Activated CD8-positive, alpha-beta T cell treated with anti-CD3 and anti-CD28 coated beads for 36 hours (primary cell): ENCODE measurements at regions of chr12 and their contacts with region 1.

Region 1: DNA sequence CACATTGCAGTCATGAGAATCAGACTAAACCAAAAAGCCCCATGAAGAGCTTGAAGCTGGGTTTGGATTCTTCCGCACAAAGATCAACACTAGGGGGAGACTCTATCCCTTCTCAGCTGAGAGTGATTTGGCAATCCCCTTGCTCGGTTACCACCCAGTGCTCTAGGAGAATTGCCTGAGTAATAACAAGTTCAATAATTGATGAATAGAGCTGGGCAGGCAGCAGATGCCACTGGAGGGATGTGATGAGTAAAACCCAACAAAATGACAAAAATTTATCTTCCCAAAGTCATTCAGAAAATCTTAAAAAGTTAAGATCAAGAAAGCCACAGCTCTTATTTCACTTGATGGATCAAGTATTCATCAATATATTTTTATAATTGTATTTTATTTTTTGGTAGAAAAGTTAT is 185.6 kb upstream of the ARID2 start:
- DNase-seq: peak; percentile 69
- ATAC-seq: peak; percentile 97
- H3K4me3 Mint-ChIP-seq: no peak overlapping the region
- H3K27ac Mint-ChIP-seq: no peak overlapping the region
- H3K4me1 Mint-ChIP-seq: peaks cover 4% of the 10 kb centered on the region
- H3K27me3 Mint-ChIP-seq: peaks cover 5% of the 10 kb centered on the region
- CTCF ChIP-seq: peak; percentile 80

Region 2: DNA sequence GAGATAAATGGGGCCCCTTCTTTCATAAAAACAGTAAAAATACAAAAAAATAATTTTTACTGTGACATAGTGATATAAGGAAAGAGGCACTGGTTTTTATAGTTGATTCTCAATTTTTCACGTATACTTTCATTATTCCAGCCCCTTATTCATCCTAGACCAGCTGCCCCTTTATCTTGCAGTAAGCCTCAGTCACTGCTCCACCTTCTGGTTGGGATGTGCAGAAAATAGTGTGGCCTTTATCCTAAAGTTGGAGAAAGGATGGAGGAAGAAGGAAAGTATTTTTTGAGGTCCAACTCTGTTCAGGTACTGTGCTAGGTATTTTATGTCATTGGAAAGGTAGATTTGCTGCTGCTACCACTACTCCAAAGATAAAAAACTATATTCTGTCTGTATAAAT is 155.4 kb before region 1 on chr12:
- CTCF ChIA-PET with region 1: no interaction called
- POLR2A ChIA-PET with region 1: no interaction called
- intact Hi-C with region 1: no loop called
- DNase-seq: peak; percentile 16
- ATAC-seq: peak; percentile 39
- H3K4me3 Mint-ChIP-seq: no peak overlapping the region
- H3K27ac Mint-ChIP-seq: no peak overlapping the region
- H3K4me1 Mint-ChIP-seq: no peaks in the 10 kb centered on the region
- H3K27me3 Mint-ChIP-seq: no peaks in the 10 kb centered on the region
- CTCF ChIP-seq: peak; percentile 18

Region 3: GRCh38 chr12:45532113-45532512 is 11.8 kb before region 1 on chr12:
- CTCF ChIA-PET with region 1: interaction called, 34 read pairs
- POLR2A ChIA-PET with region 1: no interaction called
- intact Hi-C with region 1: no loop called
- DNase-seq: no peak
- ATAC-seq: no peak
- H3K4me3 Mint-ChIP-seq: no peak overlapping the region
- H3K27ac Mint-ChIP-seq: no peak overlapping the region
- H3K4me1 Mint-ChIP-seq: no peaks in the 10 kb centered on the region
- H3K27me3 Mint-ChIP-seq: peaks cover 4% of the 10 kb centered on the region
- CTCF ChIP-seq: no peak

Region 4: GRCh38 chr12:45670346-45671065 is 126.6 kb after region 1 on chr12:
- CTCF ChIA-PET with region 1: interaction called, 15 read pairs
- POLR2A ChIA-PET with region 1: no interaction called
- intact Hi-C with region 1: no loop called
- DNase-seq: peak; percentile 9
- ATAC-seq: peak; percentile 62
- H3K4me3 Mint-ChIP-seq: no peak overlapping the region
- H3K27ac Mint-ChIP-seq: no peak overlapping the region
- H3K4me1 Mint-ChIP-seq: peaks cover 45% of the 10 kb centered on the region
- H3K27me3 Mint-ChIP-seq: no peaks in the 10 kb centered on the region
- CTCF ChIP-seq: no peak

Region 5: DNA sequence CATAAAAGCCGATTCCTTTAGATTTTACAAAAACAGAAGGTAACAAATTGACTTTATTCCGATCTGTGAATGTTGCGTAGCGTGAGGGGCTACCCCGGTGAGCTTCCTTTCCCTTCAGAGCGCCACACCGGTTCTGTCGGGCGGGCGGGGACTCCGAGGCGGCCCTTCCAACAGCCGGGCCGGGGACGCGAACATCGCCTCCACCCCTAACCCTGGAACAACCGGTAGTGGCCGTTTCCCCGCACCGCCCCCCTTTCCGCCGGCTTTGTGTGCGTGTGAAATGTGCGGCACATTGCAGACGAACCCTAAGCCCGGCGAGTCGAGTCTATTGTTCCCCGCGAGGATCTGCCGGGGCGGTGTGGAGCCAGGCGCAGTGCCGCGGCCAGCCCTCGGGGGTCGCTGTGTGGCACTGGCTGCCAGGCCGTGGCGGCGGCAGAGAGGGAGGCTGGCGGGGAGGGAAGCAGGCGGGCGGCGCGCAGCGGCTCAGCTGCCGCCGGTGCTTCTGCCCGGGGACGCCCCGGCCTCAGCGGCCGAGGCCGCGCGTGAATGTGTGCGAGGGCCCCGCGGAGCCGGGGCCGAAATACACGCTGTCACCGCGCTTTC is 184.8 kb after region 1 on chr12:
- CTCF ChIA-PET with region 1: interaction called, 119 read pairs
- POLR2A ChIA-PET with region 1: interaction called, 9 read pairs
- intact Hi-C with region 1: loop called (anchors 5 kb)
- DNase-seq: peak; percentile 97
- ATAC-seq: peak; percentile 77
- H3K4me3 Mint-ChIP-seq: peak overlapping the region; percentile 88
- H3K27ac Mint-ChIP-seq: peak overlapping the region; percentile 99
- H3K4me1 Mint-ChIP-seq: peaks cover 18% of the 10 kb centered on the region
- H3K27me3 Mint-ChIP-seq: no peaks in the 10 kb centered on the region
- CTCF ChIP-seq: peak; percentile 89

Region 6: DNA sequence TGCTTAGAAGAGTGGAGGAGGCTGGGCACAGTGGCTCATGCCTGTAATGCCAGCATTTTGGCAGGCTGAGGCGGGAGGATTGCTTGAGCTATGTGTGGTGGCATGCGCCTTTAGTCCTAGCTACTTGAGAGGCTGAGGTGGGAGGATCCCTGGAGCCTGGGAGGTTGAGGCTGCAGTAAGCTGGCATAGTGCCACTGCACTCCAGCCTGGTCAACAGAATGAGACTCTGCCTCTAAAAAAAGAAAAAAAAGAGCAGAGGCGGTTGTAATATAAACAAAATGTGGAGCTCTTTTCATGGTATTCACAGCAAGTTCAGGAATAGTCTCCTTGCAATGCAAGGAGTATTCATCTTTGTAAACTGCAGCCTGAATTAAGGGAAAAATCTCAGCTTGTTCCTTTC is 212.8 kb after region 1 on chr12:
- CTCF ChIA-PET with region 1: interaction called, 12 read pairs
- POLR2A ChIA-PET with region 1: no interaction called
- intact Hi-C with region 1: no loop called
- DNase-seq: no peak
- ATAC-seq: no peak
- H3K4me3 Mint-ChIP-seq: no peak overlapping the region
- H3K27ac Mint-ChIP-seq: no peak overlapping the region
- H3K4me1 Mint-ChIP-seq: peaks cover 39% of the 10 kb centered on the region
- H3K27me3 Mint-ChIP-seq: no peaks in the 10 kb centered on the region
- CTCF ChIP-seq: no peak